Left colon (tissue), 2 donors: ENCODE measurements at regions of chr3 and their contacts with region 1.

Region 1: GRCh38 chr3:32667122-32667521 is 17.9 kb upstream of the CNOT10 start:
- DNase-seq: no peak
- ATAC-seq: peak; percentile 33

Region 2: GRCh38 chr3:32493437-32494414 is 173.4 kb before region 1 on chr3:
- intact Hi-C with region 1: no loop called
- DNase-seq: no peak
- ATAC-seq: no peak

Region 3: DNA sequence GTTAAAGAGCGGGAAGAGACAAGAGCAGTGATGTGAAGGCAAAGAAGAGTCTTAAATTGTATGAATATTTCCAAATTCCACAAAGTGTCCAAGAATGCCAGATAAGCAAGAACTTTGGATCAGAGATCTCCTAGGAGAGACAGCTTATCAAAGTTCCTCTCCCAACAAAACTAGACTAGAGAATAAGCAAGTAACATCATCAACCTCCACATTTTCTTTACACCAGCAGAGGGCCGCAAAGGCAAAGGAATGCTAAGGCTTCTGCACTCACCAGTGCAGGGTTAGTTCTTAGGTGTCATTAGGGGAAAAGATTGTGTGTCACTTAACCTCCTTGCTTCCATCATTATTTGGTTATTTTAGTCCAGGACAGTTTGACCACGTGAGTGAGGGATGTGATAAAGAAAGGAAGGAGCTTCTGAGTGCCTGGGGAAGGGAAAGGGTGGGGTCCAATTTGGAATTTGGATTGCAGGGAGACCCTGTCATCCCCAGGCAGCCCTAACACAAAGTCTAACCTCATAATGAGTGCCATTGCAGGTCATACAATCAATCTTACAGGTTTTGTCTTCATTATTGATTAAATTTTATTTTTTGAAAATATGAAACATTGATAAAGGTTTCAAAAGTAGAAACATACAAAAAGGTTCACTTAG is 156.9 kb before region 1 on chr3:
- intact Hi-C with region 1: loop called in 1 of 2 experiments (anchors 5 kb)
- DNase-seq: peak; percentile 49 to 66
- ATAC-seq: peak; percentile 86